CD8-positive, alpha-beta memory T cell (primary cell): ENCODE measurements at regions of chr7 and their contacts with region 1.

Region 1: DNA sequence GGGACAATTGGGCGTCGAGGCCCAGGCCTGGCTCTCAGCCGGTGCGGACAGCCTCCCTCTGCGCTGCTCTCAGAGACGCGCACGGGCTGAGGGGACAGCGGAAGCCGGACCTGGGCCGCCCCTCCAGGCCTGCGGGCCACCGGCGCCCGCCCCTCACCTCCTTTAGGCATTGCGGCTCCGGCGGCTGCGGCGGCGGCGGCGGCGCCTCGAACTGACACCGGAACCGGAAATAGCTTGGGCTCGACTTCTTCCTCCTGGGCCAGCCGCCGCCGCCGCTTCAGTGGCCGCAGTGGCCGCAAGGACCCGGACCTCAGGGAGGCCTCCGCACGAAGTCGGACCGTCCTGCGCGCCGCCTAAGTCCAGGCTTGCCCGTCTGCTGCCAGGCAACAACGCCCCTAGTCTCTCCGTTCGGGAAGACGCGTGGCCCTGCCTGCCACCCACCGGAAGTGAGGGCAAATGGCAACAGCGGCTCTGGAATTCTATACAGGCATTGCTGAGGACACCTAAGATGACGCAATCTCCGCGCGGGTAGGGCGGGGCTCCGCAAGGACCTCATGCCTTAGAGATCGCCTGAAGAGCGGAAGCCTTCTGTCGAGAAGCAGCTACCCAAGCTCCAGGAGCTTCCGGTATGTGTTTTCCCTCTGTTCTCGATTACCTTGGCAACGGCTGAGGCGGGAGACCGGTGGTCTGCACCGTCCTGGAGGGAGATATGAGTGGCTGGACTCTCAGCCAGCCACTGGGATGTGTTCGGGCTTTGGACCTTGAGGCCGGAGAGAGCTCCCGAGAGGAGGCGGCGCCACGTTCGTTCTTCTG is at the starts of genes BUD31 and PDAP1:
- DNase-seq: peak; percentile 85 to 99 (median 96)
- H3K4me3 ChIP-seq: peak within 1 kb of the TSS; percentile 80
- H3K4me3 Mint-ChIP-seq: peak within 1 kb of the TSS; percentile 89 to 99 (median 95)
- H3K27ac ChIP-seq: peak within 1 kb of the TSS; percentile 93
- H3K27ac Mint-ChIP-seq: peak within 1 kb of the TSS; percentile 91 to 100 (median 98)
- H3K4me1 ChIP-seq: peaks cover 40% of the 10 kb centered on the region
- H3K4me1 Mint-ChIP-seq: peaks cover 55 to 76% (median 55%) of the 10 kb centered on the region in 3 donors
- H3K27me3 ChIP-seq: no peaks in the 10 kb centered on the region
- H3K27me3 Mint-ChIP-seq: no peaks in the 10 kb centered on the region
- total RNA-seq, gene BUD31: 185 to 188 TPM
- total RNA-seq, gene PDAP1: 198 to 210 TPM

Region 2: DNA sequence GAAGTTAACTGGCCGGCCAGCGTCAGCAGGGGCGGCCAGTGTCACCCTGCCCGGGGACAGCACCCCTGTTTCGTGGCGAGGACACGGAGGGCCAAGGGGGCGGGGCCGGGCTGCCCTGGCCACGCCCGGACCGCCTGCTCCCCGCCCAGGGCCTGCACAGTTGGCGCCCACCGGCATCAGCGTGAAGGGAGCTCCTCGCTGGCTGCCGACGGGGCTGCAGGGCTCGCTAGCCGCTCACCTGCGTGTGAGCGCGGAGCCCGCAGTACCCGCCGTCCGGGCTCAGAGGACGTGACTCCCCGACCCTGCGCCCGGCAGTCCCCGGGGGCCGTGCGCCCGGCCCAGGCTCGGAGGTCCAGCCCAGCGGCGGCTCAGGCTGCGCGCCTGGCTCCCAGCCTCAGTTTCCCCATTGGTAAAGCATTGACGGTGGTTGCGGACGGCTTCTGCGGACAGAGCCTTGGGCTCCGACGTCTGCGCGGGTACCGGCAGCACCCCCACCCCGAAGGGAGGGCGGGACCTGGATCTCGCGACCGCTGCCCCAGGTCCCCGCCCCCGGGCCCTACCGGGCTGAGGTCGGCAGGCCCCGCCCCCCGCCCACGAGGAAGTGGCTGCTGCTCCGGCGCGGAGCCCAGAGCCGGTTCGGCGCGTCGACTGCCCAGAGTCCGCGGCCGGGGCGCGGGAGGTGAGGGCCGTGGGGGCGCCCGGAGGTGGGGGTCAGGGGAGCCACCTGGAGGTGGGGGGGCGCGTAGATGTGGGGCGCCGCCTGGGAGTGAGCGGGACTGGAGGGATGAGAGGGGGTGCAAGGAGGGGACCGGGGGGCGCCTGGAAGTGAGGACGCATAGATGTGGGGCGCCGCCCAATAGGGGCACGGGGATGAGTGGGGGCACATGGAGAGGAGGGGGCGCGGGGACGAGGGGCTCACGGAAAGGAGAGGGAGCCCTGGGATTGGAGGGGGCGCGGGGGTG is 34.2 kb before region 1 on chr7 and contains the start of gene ARPC1B:
- CTCF ChIA-PET with region 1: interaction called, 6 read pairs
- POLR2A ChIA-PET with region 1: interaction called, 29 read pairs
- DNase-seq: peak; percentile 80 to 90 (median 82)
- H3K4me3 ChIP-seq: peak within 1 kb of the TSS; percentile 83
- H3K4me3 Mint-ChIP-seq: peak within 1 kb of the TSS; percentile 77 to 92 (median 80)
- H3K27ac ChIP-seq: peak within 1 kb of the TSS; percentile 90
- H3K27ac Mint-ChIP-seq: peak within 1 kb of the TSS; percentile 68 to 98 (median 94)
- H3K4me1 ChIP-seq: peaks cover 38% of the 10 kb centered on the region
- H3K4me1 Mint-ChIP-seq: peaks cover 23 to 34% (median 26%) of the 10 kb centered on the region in 3 donors
- H3K27me3 ChIP-seq: no peaks in the 10 kb centered on the region
- H3K27me3 Mint-ChIP-seq: no peaks in the 10 kb centered on the region
- total RNA-seq, gene ARPC1B: 238 to 258 TPM

Region 3: DNA sequence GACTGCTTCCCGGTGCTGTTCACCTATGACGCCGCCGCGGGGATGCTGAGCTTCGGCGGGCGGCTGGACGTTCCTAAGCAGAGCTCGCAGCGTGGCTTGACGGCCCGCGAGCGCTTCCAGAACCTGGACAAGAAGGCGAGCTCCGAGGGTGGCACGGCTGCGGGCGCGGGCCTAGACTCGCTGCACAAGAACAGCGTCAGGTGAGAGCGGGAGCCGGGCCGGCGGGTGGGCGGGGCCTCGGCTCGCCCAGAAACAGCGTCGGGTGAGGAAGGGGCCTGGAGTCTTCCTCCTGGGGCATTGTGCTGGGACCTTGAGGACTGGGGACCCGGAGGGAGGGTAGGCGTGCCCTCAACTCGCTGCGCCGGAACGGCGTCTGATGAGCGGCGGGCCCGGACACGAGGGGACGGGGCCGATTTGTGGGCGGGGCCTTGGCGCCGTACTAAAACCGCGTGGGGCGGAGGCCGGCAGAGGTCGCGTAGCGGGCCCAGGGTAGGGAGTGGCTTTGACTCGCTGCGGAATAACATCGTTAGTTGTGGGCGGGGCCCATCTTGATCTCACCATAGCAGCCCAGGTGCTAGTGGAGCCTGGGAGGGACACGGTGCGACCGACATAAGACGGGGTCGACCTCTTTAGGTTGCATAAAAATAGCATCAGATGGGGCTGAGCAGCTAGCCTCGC is 15.8 kb before region 1 on chr7:
- CTCF ChIA-PET with region 1: interaction called, 13 read pairs
- POLR2A ChIA-PET with region 1: interaction called, 45 read pairs
- DNase-seq: peak; percentile 79 to 90 (median 84)
- H3K4me3 ChIP-seq: peak overlapping the region; percentile 45
- H3K4me3 Mint-ChIP-seq: peak overlapping the region; percentile 77 to 94 (median 82)
- H3K27ac ChIP-seq: peak overlapping the region; percentile 57
- H3K27ac Mint-ChIP-seq: peak overlapping the region; percentile 89 to 97 (median 92)
- H3K4me1 ChIP-seq: peaks cover 15% of the 10 kb centered on the region
- H3K4me1 Mint-ChIP-seq: peaks cover 15 to 38% (median 16%) of the 10 kb centered on the region in 3 donors
- H3K27me3 ChIP-seq: no peaks in the 10 kb centered on the region
- H3K27me3 Mint-ChIP-seq: no peaks in the 10 kb centered on the region

Region 4: DNA sequence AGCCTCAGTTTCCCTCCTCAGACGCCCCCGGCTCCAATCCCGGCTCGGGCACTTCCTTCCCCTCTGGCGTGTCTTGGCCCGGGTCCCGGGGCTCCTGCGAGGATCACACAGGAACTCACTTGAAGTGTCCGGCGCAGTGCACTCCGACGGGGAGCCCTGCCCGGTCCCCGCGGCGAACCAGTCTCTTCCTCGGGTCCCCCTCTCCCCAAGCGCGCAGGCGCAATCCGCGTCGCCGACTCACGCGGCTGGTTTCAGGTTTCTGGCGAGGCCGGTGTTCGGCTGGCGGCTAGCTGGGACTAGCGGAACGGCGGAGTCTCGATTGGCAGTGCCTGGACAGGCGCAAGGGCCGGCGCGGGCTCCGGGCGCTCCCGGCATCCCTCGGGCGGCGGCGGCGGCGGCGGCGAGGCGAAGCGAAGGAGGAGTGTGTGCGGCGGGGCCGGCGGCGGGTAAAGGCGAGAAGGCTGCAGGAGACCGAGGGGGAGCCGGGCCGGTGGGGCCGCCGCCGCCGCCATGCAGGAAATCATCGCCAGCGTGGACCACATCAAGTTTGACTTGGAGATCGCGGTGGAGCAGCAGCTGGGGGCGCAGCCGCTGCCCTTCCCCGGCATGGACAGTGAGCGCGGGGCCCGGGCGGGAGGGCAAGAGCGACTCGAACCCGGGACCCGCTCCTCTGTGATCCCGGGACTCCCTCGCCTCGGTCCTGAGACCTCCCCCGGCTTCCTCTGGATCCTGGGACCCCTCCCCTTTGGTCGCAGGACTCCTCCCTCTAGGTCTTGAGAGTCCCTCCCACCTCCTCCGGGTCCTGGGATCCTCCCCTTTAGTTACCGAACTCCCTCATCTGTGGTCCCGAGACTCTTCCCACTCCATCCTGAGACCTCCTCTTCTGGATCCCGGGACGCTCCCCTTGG is 30.2 kb after region 1 on chr7 and contains the starts of genes CPSF4 and PTCD1:
- CTCF ChIA-PET with region 1: interaction called, 4 read pairs
- POLR2A ChIA-PET with region 1: interaction called, 10 read pairs
- DNase-seq: peak; percentile 76 to 90 (median 81)
- H3K4me3 ChIP-seq: peak within 1 kb of the TSS; percentile 90
- H3K4me3 Mint-ChIP-seq: peak within 1 kb of the TSS; percentile 94 to 99 (median 97)
- H3K27ac ChIP-seq: peak within 1 kb of the TSS; percentile 84
- H3K27ac Mint-ChIP-seq: peak within 1 kb of the TSS; percentile 84 to 98 (median 94)
- H3K4me1 ChIP-seq: peaks cover 11% of the 10 kb centered on the region
- H3K4me1 Mint-ChIP-seq: peaks cover 26 to 46% (median 36%) of the 10 kb centered on the region in 3 donors
- H3K27me3 ChIP-seq: no peaks in the 10 kb centered on the region
- H3K27me3 Mint-ChIP-seq: no peaks in the 10 kb centered on the region
- total RNA-seq, gene CPSF4: 58.7 to 66.6 TPM
- total RNA-seq, gene PTCD1: 8.4 to 11.4 TPM

Region 5: DNA sequence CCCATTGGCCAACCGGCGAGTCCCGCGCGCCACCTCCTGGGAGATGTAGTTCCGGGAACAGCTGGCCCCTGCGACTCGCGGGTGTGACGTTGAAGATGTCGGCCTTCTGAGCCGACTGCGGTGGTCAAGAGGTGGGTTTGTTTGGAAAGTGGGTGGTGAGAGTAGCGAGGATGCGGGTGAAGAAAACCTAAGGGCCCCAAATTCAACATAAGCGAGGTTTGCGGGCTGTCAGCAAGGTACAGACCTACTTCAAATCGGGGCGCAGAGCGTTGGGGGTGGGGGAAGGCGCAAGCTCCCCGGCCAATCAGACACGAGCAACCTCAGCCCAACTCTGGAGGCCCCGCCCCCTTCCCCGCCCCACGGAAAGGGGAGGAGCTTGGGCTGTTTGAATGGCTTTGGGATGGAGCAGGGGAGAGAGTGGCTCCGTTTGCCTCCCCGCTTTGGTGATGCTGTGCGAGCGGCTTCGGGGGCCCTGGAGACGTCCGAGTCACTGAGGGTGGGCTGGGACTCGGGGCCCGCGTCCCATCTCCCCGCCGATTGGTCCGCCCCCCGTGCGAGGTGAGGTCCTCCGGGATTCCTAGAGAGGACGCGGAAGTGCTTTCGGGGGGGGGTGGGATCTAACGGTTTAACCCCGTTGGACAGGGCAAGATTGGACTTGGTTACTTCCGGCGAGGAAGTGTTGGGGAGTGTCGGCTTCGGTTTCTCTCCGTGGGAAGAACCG is 96.2 kb after region 1 on chr7 and contains the start of gene ZKSCAN5:
- CTCF ChIA-PET with region 1: interaction called, 4 read pairs
- POLR2A ChIA-PET with region 1: interaction called, 16 read pairs
- DNase-seq: peak; percentile 95 to 98 (median 97)
- H3K4me3 ChIP-seq: peak within 1 kb of the TSS; percentile 94
- H3K4me3 Mint-ChIP-seq: peak within 1 kb of the TSS; percentile 94 to 100 (median 97)
- H3K27ac ChIP-seq: peak within 1 kb of the TSS; percentile 75
- H3K27ac Mint-ChIP-seq: peak within 1 kb of the TSS; percentile 92 to 100 (median 99)
- H3K4me1 ChIP-seq: peaks cover 26% of the 10 kb centered on the region
- H3K4me1 Mint-ChIP-seq: peaks cover 23 to 49% (median 38%) of the 10 kb centered on the region in 3 donors
- H3K27me3 ChIP-seq: no peaks in the 10 kb centered on the region
- H3K27me3 Mint-ChIP-seq: peaks cover 0 to 3% of the 10 kb centered on the region in 2 donors
- total RNA-seq, gene ZKSCAN5: 8.4 TPM

Region 6: DNA sequence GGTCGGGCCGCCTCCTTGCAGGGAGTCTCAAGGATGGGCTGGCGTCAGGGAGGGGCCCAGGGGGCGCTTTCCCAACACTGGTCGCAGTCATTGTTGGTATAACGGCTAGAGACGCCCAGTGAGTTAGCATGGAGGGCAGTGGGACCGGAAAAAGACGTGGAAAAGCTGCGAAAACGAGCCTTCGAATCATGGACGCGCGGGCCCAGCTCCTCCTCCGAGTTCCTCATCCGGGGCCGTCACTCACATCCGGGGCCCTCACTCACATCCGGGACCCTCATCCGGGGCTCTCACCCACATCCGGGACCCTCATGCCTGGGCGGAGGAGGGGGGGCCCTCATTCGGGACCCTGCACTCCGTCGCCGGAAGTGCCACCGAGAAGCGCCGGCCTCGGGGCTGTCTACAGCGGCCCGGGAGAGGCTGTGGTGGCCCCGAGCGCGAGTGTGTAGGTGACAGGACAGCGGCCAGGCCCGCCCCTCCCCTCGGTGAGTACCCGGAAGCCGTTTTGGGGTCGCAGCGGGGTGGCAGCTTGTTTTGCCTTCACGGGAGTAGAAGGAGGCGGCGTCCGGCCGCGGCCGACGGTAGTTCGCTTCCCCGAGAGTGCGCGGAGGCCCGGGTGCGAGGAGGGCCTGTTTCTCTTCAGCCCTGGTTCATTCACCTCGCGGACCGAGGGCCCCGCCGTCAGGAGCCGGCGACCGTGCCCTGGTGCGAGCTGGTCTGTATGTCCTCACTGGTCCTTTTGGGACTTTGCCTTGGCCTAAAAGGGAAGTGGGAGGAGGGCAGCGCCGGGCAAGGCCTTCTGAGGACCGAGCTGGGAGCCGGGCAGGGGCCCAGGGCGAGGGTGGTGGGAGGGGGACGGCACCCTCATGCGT is 150.0 kb after region 1 on chr7 and contains the start of gene ZNF655:
- CTCF ChIA-PET with region 1: no interaction called
- POLR2A ChIA-PET with region 1: interaction called, 17 read pairs
- DNase-seq: peak; percentile 88 to 97 (median 95)
- H3K4me3 ChIP-seq: peak within 1 kb of the TSS; percentile 86
- H3K4me3 Mint-ChIP-seq: peak within 1 kb of the TSS; percentile 93 to 100 (median 99)
- H3K27ac ChIP-seq: peak within 1 kb of the TSS; percentile 98
- H3K27ac Mint-ChIP-seq: peak within 1 kb of the TSS; percentile 97 to 100 (median 99)
- H3K4me1 ChIP-seq: peaks cover 33% of the 10 kb centered on the region
- H3K4me1 Mint-ChIP-seq: peaks cover 45 to 73% (median 53%) of the 10 kb centered on the region in 3 donors
- H3K27me3 ChIP-seq: no peaks in the 10 kb centered on the region
- H3K27me3 Mint-ChIP-seq: peaks cover 0 to 2% of the 10 kb centered on the region in 2 donors
- total RNA-seq, gene ZNF655: 55.8 to 58.2 TPM